Ovary (tissue), 10 donors: ENCODE measurements at regions of chr2 and their contacts with region 1.

Region 1: GRCh38 chr2:218406209-218406948 is 6.7 kb downstream of the CTDSP1 start:
- DNase-seq: peak; percentile 97 to 99 (median 98)
- H3K4me3 ChIP-seq: peak overlapping the region; percentile 45
- H3K27ac ChIP-seq: peak overlapping the region; percentile 64 to 95
- H3K4me1 ChIP-seq: peaks cover 5% of the 10 kb centered on the region
- H3K27me3 ChIP-seq: no peaks in the 10 kb centered on the region
- CTCF ChIP-seq: peak; percentile 86 to 91 (median 88)
- EP300 ChIP-seq: no peak
- POLR2A ChIP-seq: no peak

Region 2: GRCh38 chr2:218466016-218466521 is 59.7 kb after region 1 on chr2:
- intact Hi-C with region 1: loop called in 3 of 4 experiments (anchors 5 to 10 kb)
- DNase-seq: no peak
- H3K4me3 ChIP-seq: no peak overlapping the region
- H3K27ac ChIP-seq: no peak overlapping the region
- H3K4me1 ChIP-seq: no peaks in the 10 kb centered on the region
- H3K27me3 ChIP-seq: no peaks in the 10 kb centered on the region
- CTCF ChIP-seq: peak in 2 of 3 donors; percentile 6 to 41
- EP300 ChIP-seq: no peak
- POLR2A ChIP-seq: no peak

Region 3: DNA sequence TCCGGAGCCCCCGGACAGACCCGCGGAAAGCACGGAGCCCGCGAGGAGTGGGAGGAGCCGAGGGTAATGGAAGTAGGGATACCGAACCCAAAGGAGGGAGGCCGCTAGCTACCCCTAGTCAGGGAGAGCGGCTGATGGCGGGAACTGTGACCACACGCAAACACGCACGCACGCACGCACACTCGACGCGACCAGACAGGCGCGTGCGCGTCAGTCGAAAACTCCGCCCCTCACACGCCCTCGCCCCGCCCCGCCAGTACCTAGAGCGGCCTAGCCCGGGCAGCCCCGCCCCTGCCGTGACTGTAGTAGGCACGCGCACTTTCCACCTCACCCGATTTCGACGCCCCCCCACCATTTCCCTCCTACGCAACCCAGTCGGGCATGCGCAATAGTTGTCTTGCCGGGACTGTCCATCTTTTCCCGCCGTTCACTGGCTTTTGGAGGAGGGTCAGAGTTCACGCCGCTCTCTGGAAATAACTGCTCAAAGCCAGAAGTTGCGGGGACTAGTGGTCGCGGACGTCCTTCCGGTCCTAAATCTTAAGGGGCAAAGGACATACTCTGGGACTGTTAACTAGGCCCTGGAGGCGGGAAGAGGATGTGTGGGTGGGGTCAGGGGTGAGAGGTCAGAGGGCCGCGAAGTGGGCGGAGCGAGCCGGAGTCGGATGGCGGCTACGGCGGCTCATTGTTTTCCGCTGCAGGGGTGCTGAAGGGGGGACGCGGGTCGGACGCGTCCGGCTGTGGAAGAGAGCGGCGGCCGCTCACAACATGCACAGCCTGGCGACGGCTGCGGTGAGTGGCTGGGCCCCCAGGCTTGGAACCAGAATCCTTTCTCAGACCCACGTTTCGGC is 162.0 kb after region 1 on chr2 and contains the starts of genes CNOT9 and USP37:
- intact Hi-C with region 1: loop called in 1 of 4 experiments (anchors 2 kb)
- DNase-seq: peak; percentile 100
- H3K4me3 ChIP-seq: peak within 1 kb of the TSS; percentile 69
- H3K27ac ChIP-seq: peak within 1 kb of the TSS; percentile 88 to 91
- H3K4me1 ChIP-seq: peaks cover 7% of the 10 kb centered on the region
- H3K27me3 ChIP-seq: no peaks in the 10 kb centered on the region
- CTCF ChIP-seq: peak in 1 of 3 donors; percentile 21
- EP300 ChIP-seq: peak; percentile 71
- POLR2A ChIP-seq: peak; percentile 87
- total RNA-seq, gene CNOT9: 28.3 to 53.9 (median 33.2) TPM
- total RNA-seq, gene USP37: 13.3 to 56.8 (median 21.3) TPM

Region 4: GRCh38 chr2:218659258-218659987 is 253.0 kb after region 1 on chr2 and contains the starts of genes BCS1L and ZNF142:
- intact Hi-C with region 1: loop called in 1 of 4 experiments (anchors 10 kb)
- DNase-seq: peak; percentile 82 to 91 (median 83)
- H3K4me3 ChIP-seq: peak within 1 kb of the TSS; percentile 97
- H3K27ac ChIP-seq: no peak within 1 kb of the TSS
- H3K4me1 ChIP-seq: peaks cover 7% of the 10 kb centered on the region
- H3K27me3 ChIP-seq: no peaks in the 10 kb centered on the region
- CTCF ChIP-seq: no peak
- EP300 ChIP-seq: no peak
- POLR2A ChIP-seq: no peak
- total RNA-seq, gene BCS1L: 14.7 to 45.2 (median 35.0) TPM
- total RNA-seq, gene ZNF142: 10.9 to 33.9 (median 24.0) TPM

Region 5: GRCh38 chr2:218745559-218746469 is 339.4 kb after region 1 on chr2:
- intact Hi-C with region 1: no loop called
- DNase-seq: no peak
- H3K4me3 ChIP-seq: no peak overlapping the region
- H3K27ac ChIP-seq: no peak overlapping the region
- H3K4me1 ChIP-seq: no peaks in the 10 kb centered on the region
- H3K27me3 ChIP-seq: no peaks in the 10 kb centered on the region
- CTCF ChIP-seq: no peak
- EP300 ChIP-seq: no peak
- POLR2A ChIP-seq: no peak